ENCODE measurements at regions of chr2 and their contacts with region 1.

Region 1: DNA sequence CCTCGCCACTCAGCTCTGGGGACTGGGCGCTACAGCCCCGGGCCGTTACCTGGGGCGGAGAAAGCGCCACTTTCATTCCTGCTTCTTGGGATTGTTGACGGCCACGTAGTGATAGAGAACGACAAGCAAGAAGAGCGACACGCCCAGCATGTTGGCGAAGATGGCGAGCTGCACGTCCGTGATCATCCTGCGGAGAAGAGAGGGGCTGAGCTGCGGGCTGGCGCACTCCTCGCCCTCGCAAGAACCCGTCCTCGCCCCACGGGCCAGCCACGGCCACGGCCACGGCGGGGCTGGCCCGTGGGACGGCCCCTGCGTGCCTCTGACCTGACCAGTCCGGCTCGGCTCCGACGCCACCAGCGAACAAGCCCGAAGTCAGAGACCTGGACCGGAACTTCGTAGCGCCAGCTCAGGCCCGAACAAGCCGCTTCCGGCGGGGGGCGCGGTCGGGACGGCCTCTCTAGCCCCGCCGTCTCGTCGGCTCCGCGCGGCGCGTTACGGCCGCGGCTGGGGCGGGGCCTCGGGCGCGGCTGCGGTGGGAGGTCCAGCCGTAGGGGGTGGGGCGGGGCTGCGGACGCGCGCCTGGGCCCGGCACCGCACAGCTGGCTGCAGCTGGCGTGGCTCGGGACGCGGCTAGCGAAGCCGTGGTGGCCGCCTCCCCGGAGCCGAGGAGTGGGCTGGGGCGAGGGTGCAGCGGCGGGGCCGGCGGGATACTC is at the start of gene OST4:
- DNase-seq: peak; percentile 95 to 97 (median 96)
- ATAC-seq: peak; percentile 77 to 95 (median 92)
- H3K4me3 ChIP-seq: peak within 1 kb of the TSS; percentile 55 to 99 (median 89)
- H3K27ac ChIP-seq: peak within 1 kb of the TSS; percentile 62 to 99 (median 96)
- H3K4me1 ChIP-seq: peaks cover 3 to 72% (median 48%) of the 10 kb centered on the region in 12 donors
- H3K27me3 ChIP-seq: no peaks in the 10 kb centered on the region
- CTCF ChIP-seq: peak in 2 of 12 donors; percentile 30 to 40
- POLR2A ChIP-seq: peak in 1 of 2 donors; percentile 77
- total RNA-seq, gene OST4: 215 to 466 (median 343) TPM

Region 2: DNA sequence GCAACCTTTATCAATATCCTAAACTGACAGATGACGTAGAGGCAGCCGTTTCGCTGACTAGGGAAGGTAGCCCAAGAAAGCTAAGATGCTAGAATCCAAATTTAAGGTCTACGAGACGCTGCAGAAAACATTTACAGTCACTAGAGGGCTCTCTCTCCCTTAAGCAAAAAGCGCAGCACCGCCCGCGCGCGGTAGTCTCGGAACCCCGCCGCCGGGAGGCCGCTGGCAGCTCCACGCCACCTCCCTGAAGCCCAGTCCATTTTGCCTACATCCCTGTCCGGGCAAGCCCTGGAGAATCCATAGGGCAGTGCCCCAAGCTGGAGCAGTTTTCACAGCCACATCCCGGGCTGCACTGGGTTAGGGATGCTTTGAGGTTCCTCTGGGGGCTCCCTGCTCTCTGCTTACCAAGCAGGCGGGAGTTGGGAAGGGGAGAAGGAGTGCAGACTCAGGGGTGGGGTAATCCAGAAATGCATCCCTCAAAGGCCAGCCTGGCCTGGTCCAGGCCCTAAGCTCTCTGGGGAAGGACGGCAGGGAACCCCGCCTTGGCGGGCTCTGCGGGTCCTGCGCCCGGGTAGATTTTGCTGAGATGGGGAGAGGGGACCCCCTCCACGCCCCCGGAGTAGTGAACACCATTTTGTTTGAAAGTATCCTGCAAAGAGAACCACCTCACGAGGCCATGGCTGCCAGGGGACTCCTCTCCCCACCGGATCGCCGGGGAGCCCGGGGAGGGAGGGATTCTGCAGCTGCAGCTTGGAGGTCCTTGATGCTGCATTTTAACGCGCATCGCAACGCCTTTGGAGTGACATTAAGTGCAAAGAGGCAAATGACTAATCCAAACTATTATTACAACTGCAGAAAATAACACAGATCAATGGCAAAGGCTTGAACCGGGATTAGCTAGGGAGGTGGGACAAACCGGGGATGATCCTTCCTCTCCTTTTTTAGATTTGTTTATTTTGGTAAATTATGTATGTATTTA is 224.8 kb before region 1 on chr2:
- intact Hi-C with region 1: no loop called
- DNase-seq: peak; percentile 57 to 82 (median 64)
- ATAC-seq: peak in 3 of 4 donors; percentile 78 to 89 (median 88)
- H3K4me3 ChIP-seq: peak overlapping the region in 1 of 12 donors; percentile 16
- H3K27ac ChIP-seq: no peak overlapping the region
- H3K4me1 ChIP-seq: peaks cover 9 to 39% (median 30%) of the 10 kb centered on the region in 12 donors
- H3K27me3 ChIP-seq: peaks cover 41 to 93% (median 63%) of the 10 kb centered on the region in 9 donors
- CTCF ChIP-seq: peak; percentile 68 to 84 (median 77)
- POLR2A ChIP-seq: no peak

Region 3: DNA sequence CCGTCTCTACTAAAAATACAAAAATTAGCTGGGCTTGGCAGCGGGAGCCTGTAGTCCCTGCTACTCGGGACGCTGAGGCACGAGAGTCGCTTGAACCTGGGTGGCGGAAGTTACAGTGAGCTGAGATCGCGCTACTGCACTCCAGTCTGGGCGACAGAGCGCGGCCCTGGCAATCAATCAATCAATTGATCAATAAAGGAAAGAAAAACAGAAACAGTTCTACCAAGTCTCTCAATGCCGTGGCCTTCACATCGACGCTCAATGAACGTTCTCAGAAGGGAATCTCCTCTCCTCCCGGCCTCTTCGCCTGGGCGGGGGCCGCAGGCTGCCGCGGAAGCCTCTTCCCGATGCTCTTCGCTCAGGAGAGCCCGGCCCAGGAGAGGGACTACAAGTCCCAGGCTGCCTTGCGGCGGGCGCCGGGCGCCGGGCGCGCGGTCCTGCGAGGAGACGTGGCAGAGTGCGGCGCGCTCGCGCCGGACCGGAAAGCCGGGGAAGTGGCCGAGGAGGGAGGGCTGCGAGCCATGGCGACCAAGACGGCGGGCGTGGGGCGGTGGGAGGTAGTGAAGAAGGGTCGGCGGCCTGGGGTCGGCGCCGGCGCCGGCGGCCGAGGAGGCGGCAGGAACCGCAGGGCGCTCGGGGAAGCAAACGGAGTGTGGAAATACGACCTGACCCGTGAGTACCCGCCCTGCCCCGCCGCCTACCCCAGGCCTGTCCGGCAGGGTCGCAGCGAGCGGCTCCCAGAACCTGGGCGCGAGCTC is 38.8 kb before region 1 on chr2 and contains the start of gene TMEM214:
- intact Hi-C with region 1: loop called in 2 of 10 experiments (anchors 5 kb)
- DNase-seq: peak; percentile 91 to 96 (median 92)
- ATAC-seq: peak; percentile 93 to 99 (median 98)
- H3K4me3 ChIP-seq: peak within 1 kb of the TSS; percentile 76 to 99 (median 94)
- H3K27ac ChIP-seq: peak within 1 kb of the TSS; percentile 59 to 92 (median 85)
- H3K4me1 ChIP-seq: peaks cover 0 to 29% (median 17%) of the 10 kb centered on the region in 12 donors
- H3K27me3 ChIP-seq: no peaks in the 10 kb centered on the region
- CTCF ChIP-seq: peak in 2 of 12 donors; percentile 12 to 16
- POLR2A ChIP-seq: peak in 1 of 2 donors; percentile 86
- total RNA-seq, gene TMEM214: 18.3 to 58.0 (median 31.6) TPM

Region 4: DNA sequence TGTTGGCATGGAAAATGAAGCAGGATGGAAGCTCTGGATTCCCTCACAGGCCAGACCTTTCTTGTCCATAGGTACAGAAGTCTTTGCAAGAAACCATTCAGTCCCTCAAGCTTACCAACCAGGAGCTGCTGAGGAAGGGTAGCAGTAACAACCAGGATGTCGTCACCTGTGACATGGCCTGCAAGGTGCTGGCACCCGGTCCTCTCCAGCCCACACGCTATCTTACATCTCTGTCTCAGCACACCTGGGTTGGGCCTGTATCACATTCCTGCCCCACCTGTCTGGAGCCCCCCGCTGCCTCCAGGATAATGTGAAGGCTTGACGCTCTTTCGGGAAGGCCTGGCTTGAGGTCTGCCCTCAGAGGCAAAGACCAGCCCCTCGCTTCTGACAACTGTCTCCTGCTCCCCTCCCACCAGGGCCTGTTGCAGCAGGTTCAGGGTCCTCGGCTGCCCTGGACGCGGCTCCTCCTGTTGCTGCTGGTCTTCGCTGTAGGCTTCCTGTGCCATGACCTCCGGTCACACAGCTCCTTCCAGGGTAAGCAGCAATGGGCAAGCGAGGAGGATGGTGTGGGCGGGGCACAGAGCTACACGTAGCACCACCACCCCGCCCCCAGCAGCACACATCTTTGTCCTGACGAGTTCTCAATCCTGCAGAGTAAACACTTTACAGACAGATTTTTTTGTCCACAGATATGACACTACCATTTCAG is 32.6 kb before region 1 on chr2:
- intact Hi-C with region 1: loop called in 2 of 10 experiments (anchors 5 kb)
- DNase-seq: no peak
- ATAC-seq: no peak
- H3K4me3 ChIP-seq: no peak overlapping the region
- H3K27ac ChIP-seq: no peak overlapping the region
- H3K4me1 ChIP-seq: peaks cover 0 to 27% (median 12%) of the 10 kb centered on the region in 12 donors
- H3K27me3 ChIP-seq: no peaks in the 10 kb centered on the region
- CTCF ChIP-seq: no peak
- POLR2A ChIP-seq: no peak

Measured in heart left ventricle (tissue), 16 donors.